Activated CD4-positive, alpha-beta T cell treated with anti-CD3 and anti-CD28 coated beads for 36 hours (primary cell): ENCODE measurements at regions of chr15 and their contacts with region 1.

Region 1: GRCh38 chr15:78065284-78065872 is 12.1 kb downstream of the TBC1D2B start:
- DNase-seq: peak; percentile 16
- ATAC-seq: no peak
- H3K4me3 Mint-ChIP-seq: no peak overlapping the region
- H3K27ac Mint-ChIP-seq: no peak overlapping the region
- H3K4me1 Mint-ChIP-seq: peaks cover 14% of the 10 kb centered on the region
- H3K27me3 Mint-ChIP-seq: no peaks in the 10 kb centered on the region

Region 2: DNA sequence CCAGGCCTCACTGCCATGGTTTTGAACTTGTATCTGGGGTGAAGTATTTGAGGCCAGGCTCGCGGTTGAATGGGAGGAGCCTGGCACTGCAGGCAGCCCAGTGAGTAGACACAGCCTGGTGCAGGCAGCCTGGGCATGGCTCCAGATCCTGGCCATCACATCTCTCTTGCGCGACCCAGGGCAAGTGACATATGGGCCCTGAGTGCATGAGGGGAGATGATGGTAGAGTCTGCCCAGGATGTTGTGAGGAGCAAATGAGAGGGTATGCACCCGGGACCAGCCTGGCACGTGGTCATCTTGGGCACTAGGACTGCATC is 91.3 kb before region 1 on chr15:
- CTCF ChIA-PET with region 1: no interaction called
- POLR2A ChIA-PET with region 1: no interaction called
- intact Hi-C with region 1: no loop called
- DNase-seq: no peak
- ATAC-seq: no peak
- H3K4me3 Mint-ChIP-seq: no peak overlapping the region
- H3K27ac Mint-ChIP-seq: no peak overlapping the region
- H3K4me1 Mint-ChIP-seq: no peaks in the 10 kb centered on the region
- H3K27me3 Mint-ChIP-seq: no peaks in the 10 kb centered on the region

Region 3: DNA sequence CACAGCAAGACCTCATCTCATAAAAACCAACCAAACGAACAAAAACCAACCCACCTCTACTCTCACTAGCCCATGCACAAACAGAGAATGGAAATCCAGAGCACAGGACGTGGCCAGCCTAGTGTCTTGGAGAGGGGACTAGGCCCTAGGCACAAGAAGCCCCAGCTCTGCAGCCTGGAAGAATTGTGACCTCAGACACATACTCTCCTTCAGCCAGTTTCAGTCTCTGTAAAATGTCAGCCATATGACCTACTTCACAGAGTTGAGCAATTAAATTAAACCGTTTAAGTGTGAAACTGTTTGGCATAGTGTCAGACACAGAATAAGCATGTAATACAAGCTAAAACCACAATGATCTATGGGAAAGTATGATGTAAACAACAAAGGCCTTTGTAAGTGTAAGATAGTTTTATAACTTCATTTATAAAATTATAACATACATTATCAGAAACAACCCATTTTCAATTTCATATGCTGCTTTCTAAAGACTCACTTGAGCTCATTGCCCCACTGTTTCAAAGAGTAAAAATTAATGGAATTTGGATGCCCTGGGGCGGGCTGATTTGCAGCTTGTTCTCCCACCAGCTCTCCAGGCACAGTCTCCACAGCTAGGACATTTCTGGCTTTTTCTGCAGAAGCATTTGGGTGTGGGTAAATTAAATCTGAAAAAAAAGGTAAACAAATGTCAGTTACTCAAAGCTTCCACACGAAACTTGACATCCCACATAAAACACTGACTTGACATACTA is 20.8 kb before region 1 on chr15:
- CTCF ChIA-PET with region 1: interaction called, 74 read pairs
- POLR2A ChIA-PET with region 1: interaction called, 3 read pairs
- intact Hi-C with region 1: no loop called
- DNase-seq: peak; percentile 50
- ATAC-seq: peak; percentile 61
- H3K4me3 Mint-ChIP-seq: no peak overlapping the region
- H3K27ac Mint-ChIP-seq: peak overlapping the region; percentile 79
- H3K4me1 Mint-ChIP-seq: peaks cover 91% of the 10 kb centered on the region
- H3K27me3 Mint-ChIP-seq: no peaks in the 10 kb centered on the region

Region 4: DNA sequence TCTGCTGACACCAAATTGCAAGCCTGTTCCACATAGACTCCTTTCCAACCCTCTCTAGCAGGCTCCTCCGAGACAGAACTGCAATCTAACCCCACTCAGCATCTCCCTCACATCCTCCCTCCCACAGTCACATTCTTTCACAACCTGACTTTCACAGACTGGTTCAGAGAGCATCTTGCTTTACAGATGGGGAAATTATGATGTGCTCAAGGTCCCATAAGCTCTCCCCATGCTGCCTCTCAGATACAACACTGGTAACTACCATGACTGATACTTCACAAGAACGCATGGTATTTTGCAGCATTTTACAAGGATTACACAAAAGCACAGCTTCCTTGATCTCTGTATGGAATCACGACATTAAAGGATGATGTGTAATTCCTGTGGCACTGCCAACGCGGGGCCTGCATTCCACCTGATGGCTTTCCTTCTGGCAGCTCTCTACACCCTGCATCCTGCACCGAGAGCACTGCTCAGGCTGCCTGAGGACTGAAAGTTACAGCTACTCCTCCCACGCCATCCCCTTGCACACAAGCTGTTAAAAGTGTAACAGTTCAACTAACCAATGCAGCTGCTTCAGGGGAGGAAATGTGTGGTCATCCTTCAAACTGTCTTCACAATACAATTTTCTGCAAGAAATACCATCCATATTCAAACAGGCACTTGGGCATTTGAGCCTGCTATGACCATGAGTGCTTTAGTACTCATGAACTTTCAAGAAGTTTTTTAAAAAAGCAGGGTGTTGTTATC is 15.5 kb before region 1 on chr15:
- CTCF ChIA-PET with region 1: interaction called, 74 read pairs
- POLR2A ChIA-PET with region 1: interaction called, 6 read pairs
- intact Hi-C with region 1: loop called (anchors 2 kb)
- DNase-seq: peak; percentile 86
- ATAC-seq: peak; percentile 63
- H3K4me3 Mint-ChIP-seq: peak overlapping the region; percentile 54
- H3K27ac Mint-ChIP-seq: peak overlapping the region; percentile 90
- H3K4me1 Mint-ChIP-seq: peaks cover 97% of the 10 kb centered on the region
- H3K27me3 Mint-ChIP-seq: no peaks in the 10 kb centered on the region